Testis (tissue), 5 donors: ENCODE measurements at regions of chr14 and their contacts with region 1.

Region 1: DNA sequence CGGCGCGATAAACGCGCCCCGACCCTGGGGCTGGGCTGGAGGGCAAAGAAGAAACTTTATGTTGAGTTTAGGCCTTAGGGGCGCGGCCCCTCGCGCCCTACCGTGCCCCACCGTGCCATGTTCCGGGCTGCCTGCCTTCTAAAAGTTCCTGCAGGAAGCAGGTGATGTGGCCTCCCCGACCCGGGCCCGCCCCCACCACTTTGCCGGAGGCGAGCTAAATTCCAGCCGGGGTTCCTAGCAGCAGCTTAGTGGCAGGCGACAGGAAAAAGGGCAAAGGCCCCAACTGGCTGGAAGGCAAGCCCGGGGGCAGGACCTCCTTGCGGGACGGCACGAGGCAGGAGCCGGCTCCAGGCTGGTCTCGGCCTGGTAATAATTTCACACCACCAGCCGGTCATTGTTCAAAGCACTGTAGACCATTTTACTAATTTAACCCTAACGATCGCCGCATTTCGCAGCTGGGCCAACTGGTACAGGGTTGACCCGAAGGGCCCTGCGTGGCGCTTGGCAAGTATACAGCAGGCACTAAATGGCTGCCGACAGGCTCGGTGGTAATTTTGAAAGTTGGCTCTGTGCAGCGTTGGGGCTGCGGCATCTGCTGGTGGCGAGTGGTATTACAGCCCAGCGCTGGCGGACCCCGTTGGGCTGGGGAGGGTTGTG is 895 bp upstream of the CCDC88C start:
- DNase-seq: peak; percentile 83
- H3K4me3 ChIP-seq: peak overlapping the region; percentile 38 to 71
- H3K27ac ChIP-seq: no peak overlapping the region
- H3K4me1 ChIP-seq: peaks cover 5% of the 10 kb centered on the region
- H3K27me3 ChIP-seq: no peaks in the 10 kb centered on the region
- CTCF ChIP-seq: peak; percentile 99
- POLR2A ChIP-seq: no peak

Region 2: GRCh38 chr14:91323671-91324605 is 94.6 kb before region 1 on chr14:
- intact Hi-C with region 1: loop called (anchors 5 kb)
- DNase-seq: peak; percentile 96
- H3K4me3 ChIP-seq: peak overlapping the region; percentile 33 to 46
- H3K27ac ChIP-seq: peak overlapping the region; percentile 23 to 41
- H3K4me1 ChIP-seq: peaks cover 10% of the 10 kb centered on the region
- H3K27me3 ChIP-seq: no peaks in the 10 kb centered on the region
- CTCF ChIP-seq: peak; percentile 98 to 99 (median 98)
- POLR2A ChIP-seq: no peak

Region 3: DNA sequence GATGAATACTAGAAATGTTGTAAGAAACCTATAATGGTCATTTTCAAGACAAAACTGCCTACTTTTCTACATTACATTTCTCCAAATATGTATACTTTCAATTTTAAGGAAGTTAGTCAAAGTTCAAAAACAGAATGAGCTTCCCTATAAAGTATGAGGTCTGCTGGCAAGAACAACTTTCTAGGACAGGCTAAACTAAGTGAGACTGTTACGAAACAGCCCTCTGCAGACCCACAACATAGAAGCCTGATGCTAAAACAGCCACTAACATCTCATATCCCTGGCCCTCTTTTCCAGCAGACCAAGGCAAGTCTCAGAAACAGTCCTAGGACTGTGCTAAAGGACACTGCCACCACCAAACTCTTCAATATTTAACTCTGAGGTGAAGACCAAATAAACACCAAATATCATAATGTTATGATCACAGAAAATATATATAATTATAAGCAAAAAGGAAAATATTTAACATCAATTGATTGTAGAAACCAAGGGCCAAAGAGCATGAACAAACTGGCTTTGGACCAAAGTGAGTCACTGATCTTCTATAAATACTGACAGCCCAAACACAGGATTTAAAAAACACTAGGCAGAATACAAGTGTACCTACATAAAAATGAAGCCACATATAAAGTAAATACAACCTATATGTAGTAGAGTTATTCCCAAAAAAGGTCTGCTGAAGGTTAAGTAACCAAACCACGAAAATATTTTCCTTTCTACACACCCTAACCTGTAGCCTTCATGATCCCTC is 63.9 kb after region 1 on chr14:
- intact Hi-C with region 1: no loop called
- DNase-seq: no peak
- H3K4me3 ChIP-seq: no peak overlapping the region
- H3K27ac ChIP-seq: no peak overlapping the region
- H3K4me1 ChIP-seq: no peaks in the 10 kb centered on the region
- H3K27me3 ChIP-seq: no peaks in the 10 kb centered on the region
- CTCF ChIP-seq: no peak
- POLR2A ChIP-seq: no peak